Psoas muscle (tissue), 8 donors: ENCODE measurements at regions of chr4 and their contacts with region 1.

Region 1: DNA sequence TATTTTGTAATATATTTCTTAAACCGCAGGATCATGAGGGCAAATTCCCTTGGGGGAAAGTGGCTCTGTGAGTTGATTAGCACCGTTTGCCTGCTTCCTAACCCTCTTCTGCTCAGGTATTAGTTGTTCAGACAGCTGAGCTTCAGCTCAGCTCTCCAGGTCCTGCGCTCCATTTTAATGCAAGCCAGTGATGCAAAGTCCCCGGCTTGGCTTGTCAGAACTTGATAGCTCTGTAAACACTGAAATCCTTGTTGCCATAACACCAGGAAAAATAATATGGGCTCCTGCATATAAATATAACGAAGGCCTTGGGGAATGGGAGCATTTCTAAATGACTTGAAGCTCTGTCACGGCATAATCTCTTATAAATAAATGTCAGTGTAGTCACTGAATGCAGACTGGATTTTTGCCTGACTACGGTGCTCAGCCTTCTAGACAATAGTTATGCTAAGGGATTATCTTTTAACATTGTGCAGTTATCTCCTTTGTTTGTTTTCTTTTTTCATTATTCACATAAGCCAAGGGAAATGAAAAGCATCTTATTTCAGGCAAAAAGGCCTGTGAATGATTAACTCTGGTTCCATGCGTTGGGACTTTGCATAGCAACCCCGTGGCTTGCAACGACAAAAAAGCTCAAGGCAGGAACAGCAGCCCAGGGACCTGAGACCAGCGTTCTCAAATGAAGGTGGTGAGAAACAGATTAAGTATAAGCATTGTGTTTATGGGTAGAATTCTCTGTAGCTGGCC is 253.2 kb downstream of the SPRY1 start:
- DNase-seq: peak; percentile 22 to 59
- ATAC-seq: peak; percentile 77 to 91 (median 84)
- H3K4me3 ChIP-seq: peak overlapping the region; percentile 35
- H3K27ac ChIP-seq: peak overlapping the region; percentile 79
- H3K4me1 ChIP-seq: peaks cover 29% of the 10 kb centered on the region
- H3K27me3 ChIP-seq: no peaks in the 10 kb centered on the region
- CTCF ChIP-seq: no peak

Region 2: DNA sequence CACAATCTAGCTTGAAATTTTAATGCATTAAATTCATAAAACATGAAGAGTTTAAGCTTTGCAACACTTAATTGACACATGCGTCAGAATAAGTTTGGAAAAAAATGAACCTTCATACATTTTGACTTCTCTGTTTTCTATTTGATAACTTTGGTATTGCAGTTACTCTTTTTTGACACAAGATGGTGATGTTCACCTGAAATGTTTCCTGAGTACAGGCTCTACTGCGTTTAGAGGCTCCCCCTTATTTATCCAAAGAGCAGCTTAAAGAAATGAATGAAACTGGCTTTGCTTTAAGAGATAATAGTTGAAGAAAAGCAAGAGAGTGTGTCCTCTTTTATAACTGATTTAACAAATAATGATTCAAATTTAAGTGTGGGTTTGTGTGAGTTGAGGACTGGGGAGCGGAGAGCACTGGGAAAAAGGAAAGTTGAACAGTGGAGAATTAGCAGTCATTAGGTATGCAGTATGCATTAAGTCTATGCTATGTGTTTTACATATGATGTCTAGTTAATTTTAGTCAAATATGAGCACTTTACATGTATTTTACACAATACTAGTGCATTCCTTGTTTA is 546.8 kb before region 1 on chr4:
- intact Hi-C with region 1: loop called in 1 of 2 experiments (anchors 10 kb)
- DNase-seq: no peak
- ATAC-seq: peak; percentile 58 to 88 (median 68)
- H3K4me3 ChIP-seq: no peak overlapping the region
- H3K27ac ChIP-seq: no peak overlapping the region
- H3K4me1 ChIP-seq: no peaks in the 10 kb centered on the region
- H3K27me3 ChIP-seq: no peaks in the 10 kb centered on the region
- CTCF ChIP-seq: peak; percentile 82

Region 3: DNA sequence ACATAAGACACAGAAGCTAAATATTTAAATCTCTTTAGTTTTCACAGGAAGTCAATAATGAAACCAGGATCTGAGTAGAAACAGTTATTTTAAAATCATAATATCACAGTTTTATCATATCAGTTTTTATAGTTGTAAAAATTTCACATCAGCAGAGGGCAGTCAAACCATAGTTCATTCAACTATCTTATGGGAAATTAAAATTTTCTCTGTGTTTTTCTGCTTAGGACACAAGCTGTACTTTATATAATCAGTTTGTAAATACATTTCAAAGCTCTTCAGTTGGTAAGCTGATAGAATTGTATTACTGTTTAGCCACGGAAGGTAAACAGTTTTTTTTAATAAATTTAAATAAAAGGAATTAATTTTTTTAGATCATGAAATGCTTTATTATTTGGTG is 522.6 kb before region 1 on chr4:
- intact Hi-C with region 1: loop called in 1 of 2 experiments (anchors 10 kb)
- DNase-seq: no peak
- ATAC-seq: no peak
- H3K4me3 ChIP-seq: no peak overlapping the region
- H3K27ac ChIP-seq: no peak overlapping the region
- H3K4me1 ChIP-seq: no peaks in the 10 kb centered on the region
- H3K27me3 ChIP-seq: no peaks in the 10 kb centered on the region
- CTCF ChIP-seq: peak; percentile 37

Region 4: GRCh38 chr4:123477711-123478209 is 172.1 kb before region 1 on chr4:
- intact Hi-C with region 1: no loop called
- DNase-seq: peak in 1 of 2 donors; percentile 17
- ATAC-seq: peak in 3 of 4 donors; percentile 20 to 46 (median 25)
- H3K4me3 ChIP-seq: no peak overlapping the region
- H3K27ac ChIP-seq: no peak overlapping the region
- H3K4me1 ChIP-seq: peaks cover 12% of the 10 kb centered on the region
- H3K27me3 ChIP-seq: no peaks in the 10 kb centered on the region
- CTCF ChIP-seq: no peak

Region 5: GRCh38 chr4:123495530-123495929 is 154.3 kb before region 1 on chr4:
- intact Hi-C with region 1: loop called in 1 of 2 experiments (anchors 10 kb)
- DNase-seq: peak; percentile 21 to 63
- ATAC-seq: peak; percentile 98 to 99 (median 99)
- H3K4me3 ChIP-seq: no peak overlapping the region
- H3K27ac ChIP-seq: peak overlapping the region; percentile 79
- H3K4me1 ChIP-seq: peaks cover 13% of the 10 kb centered on the region
- H3K27me3 ChIP-seq: no peaks in the 10 kb centered on the region
- CTCF ChIP-seq: no peak

Region 6: DNA sequence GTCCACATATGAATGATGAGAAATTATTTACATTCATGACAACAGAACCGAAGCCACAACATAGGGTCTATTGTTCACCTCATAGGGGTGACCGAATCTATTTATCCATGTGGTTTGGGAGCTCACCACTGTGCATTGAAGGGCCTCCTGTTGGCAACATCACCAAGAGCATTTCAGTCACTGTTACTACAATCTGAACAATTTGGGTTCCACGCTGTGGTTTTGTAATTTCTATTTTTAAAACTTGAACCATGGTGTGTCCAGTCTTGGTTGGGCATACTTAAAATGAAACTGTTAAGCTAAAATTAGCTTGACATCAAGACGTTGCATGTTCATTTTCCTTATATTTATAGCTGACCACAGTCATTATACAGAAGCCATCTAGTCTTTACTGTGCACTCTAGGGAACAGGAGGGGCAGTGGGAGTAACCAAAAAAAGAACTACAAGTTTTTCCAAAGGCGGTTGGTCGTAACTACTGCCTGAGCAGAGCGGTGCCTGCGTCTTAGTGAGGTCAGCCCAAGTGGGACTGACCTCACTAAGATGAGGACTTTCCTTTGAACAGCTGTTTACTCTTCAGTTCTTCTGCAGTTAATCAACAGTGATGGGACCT is 61.1 kb before region 1 on chr4:
- intact Hi-C with region 1: loop called (anchors 5 to 10 kb)
- DNase-seq: peak in 1 of 2 donors; percentile 50
- ATAC-seq: peak; percentile 87 to 93 (median 91)
- H3K4me3 ChIP-seq: peak overlapping the region; percentile 26
- H3K27ac ChIP-seq: peak overlapping the region; percentile 96
- H3K4me1 ChIP-seq: peaks cover 13% of the 10 kb centered on the region
- H3K27me3 ChIP-seq: no peaks in the 10 kb centered on the region
- CTCF ChIP-seq: no peak

Region 7: GRCh38 chr4:123599920-123600810 is 49.7 kb before region 1 on chr4:
- intact Hi-C with region 1: loop called in 1 of 2 experiments (anchors 10 kb)
- DNase-seq: peak; percentile 63 to 76
- ATAC-seq: peak; percentile 44 to 68 (median 58)
- H3K4me3 ChIP-seq: no peak overlapping the region
- H3K27ac ChIP-seq: peak overlapping the region; percentile 51
- H3K4me1 ChIP-seq: peaks cover 17% of the 10 kb centered on the region
- H3K27me3 ChIP-seq: no peaks in the 10 kb centered on the region
- CTCF ChIP-seq: no peak

Region 8: GRCh38 chr4:123838474-123838873 is 188.7 kb after region 1 on chr4:
- intact Hi-C with region 1: no loop called
- DNase-seq: no peak
- ATAC-seq: no peak
- H3K4me3 ChIP-seq: no peak overlapping the region
- H3K27ac ChIP-seq: peak overlapping the region; percentile 10
- H3K4me1 ChIP-seq: peaks cover 37% of the 10 kb centered on the region
- H3K27me3 ChIP-seq: no peaks in the 10 kb centered on the region
- CTCF ChIP-seq: no peak

Region 9: GRCh38 chr4:123922847-123923246 is 273.0 kb after region 1 on chr4:
- intact Hi-C with region 1: no loop called
- DNase-seq: no peak
- ATAC-seq: no peak
- H3K4me3 ChIP-seq: no peak overlapping the region
- H3K27ac ChIP-seq: no peak overlapping the region
- H3K4me1 ChIP-seq: peaks cover 4% of the 10 kb centered on the region
- H3K27me3 ChIP-seq: no peaks in the 10 kb centered on the region
- CTCF ChIP-seq: no peak

Region 10: GRCh38 chr4:124666496-124666895 is 1016.7 kb after region 1 on chr4:
- intact Hi-C with region 1: no loop called
- DNase-seq: no peak
- ATAC-seq: no peak
- H3K4me3 ChIP-seq: no peak overlapping the region
- H3K27ac ChIP-seq: no peak overlapping the region
- H3K4me1 ChIP-seq: no peaks in the 10 kb centered on the region
- H3K27me3 ChIP-seq: no peaks in the 10 kb centered on the region
- CTCF ChIP-seq: no peak